ENCODE measurements at regions of chr15 and their contacts with region 1.

Region 1: GRCh38 chr15:42650208-42651066 is 75.0 kb downstream of the STARD9 start:
- DNase-seq: peak; percentile 61
- ATAC-seq: peak; percentile 100
- H3K4me3 ChIP-seq: no peak overlapping the region
- H3K27ac ChIP-seq: no peak overlapping the region
- H3K4me1 ChIP-seq: no peaks in the 10 kb centered on the region
- H3K27me3 ChIP-seq: no peaks in the 10 kb centered on the region
- CTCF ChIP-seq: peak; percentile 69 to 85 (median 82)
- POLR2A ChIP-seq: no peak
- RAD21 ChIP-seq: peak; percentile 86

Region 2: GRCh38 chr15:42474827-42475226 is 175.6 kb before region 1 on chr15:
- CTCF ChIA-PET with region 1: no interaction called
- POLR2A ChIA-PET with region 1: no interaction called
- RAD21 ChIA-PET with region 1: no interaction called
- intact Hi-C with region 1: loop called (anchors 5 kb)
- DNase-seq: no peak
- ATAC-seq: no peak
- H3K4me3 ChIP-seq: no peak overlapping the region
- H3K27ac ChIP-seq: no peak overlapping the region
- H3K4me1 ChIP-seq: no peaks in the 10 kb centered on the region
- H3K27me3 ChIP-seq: no peaks in the 10 kb centered on the region
- CTCF ChIP-seq: no peak
- POLR2A ChIP-seq: no peak
- RAD21 ChIP-seq: no peak